Endothelial cell of umbilical vein (primary cell): ENCODE measurements at regions of chr6 and their contacts with region 1.

Region 1: DNA sequence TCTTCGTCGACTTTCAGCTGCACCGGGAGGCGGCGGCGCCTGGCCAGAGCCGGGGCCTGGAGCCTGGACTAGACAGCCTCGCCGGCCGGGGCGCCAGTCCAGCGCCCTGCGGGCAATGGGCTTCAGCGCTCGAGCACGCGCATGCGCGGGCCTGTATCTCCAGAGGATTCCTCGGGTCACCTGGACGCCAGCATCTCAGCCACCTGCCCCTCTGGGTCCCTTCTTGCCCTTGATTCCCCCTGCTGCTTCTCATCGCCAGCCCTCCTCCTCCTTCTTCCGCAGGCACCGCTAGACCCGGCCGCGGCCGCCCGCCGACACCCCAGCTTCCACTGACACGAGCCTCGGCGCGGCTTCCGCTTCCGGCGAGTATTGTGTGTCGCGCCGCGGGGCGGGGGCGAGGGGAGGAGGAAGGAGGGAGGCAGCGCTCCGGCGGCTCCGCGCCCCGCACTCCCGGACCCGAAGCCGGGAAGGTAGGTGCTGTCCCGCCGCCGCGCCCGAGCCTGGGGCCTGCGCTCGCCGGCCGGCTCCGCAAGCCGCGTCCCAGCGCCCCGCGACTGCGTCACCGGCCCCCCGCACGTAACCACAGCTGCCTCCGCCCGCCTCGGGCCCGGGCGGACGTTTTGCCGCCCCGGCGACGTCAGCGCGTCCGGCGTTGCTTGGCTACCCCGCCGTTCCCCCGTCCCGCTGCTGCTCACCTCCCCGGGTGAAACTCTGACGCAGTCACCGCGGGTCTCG is at the start of gene TRIM39:
- DNase-seq: peak; percentile 85
- H3K4me3 ChIP-seq: peak within 1 kb of the TSS; percentile 65 to 87 (median 85)
- H3K27ac ChIP-seq: peak within 1 kb of the TSS; percentile 89
- H3K4me1 ChIP-seq: peaks cover 24% of the 10 kb centered on the region
- H3K27me3 ChIP-seq: no peaks in the 10 kb centered on the region
- CTCF ChIP-seq: no peak
- POLR2A ChIP-seq: peak; percentile 62
- total RNA-seq, gene TRIM39: 13.1 and 13.5 TPM in 2 replicates

Region 2: DNA sequence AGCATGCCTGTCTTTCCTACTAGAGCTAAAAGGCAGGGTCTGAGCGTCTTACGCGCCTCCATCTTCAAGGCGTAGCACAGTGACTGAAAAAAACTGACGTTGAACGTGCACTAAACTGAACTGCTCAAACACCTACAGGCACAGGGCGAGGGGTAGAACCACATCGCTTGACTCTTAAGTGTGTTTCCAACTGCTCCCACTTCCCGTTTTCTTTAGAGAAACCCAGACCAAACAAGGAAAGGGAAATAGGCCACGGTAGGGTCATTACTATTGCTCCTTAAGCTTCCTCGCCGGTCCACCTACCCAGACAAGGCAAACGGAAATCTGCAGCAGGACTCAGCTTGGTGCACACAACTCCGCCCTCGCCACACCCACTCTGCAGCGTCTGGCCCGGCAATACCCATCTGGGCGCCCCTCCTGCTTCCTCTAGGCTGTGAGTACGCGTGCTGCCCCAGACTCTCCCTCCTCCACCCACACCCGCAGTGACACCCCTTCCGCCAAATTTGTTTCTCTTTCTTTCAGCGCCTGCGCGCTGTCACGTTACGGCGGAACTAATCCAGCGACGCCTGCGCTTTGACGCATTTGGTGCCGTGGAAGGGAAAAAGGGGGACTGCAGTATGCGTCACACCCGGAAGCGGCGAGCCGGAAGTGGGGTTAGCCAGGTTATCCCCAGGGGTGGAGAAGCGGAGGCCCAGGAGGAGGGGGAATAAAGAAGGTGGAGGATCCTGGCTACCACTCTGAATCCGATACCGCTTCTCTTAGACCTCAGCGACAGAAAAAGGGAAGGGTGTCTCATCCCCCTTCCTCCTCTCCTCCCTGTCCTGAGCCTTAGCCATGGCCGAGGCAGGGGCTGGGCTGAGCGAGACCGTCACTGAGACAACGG is 259.9 kb before region 1 on chr6 and contains the start of gene PPP1R11:
- CTCF ChIA-PET with region 1: no interaction called
- POLR2A ChIA-PET with region 1: no interaction called
- dilution Hi-C with region 1: no loop called
- intact Hi-C with region 1: loop called (anchors 5 kb)
- DNase-seq: peak; percentile 100
- H3K4me3 ChIP-seq: peak within 1 kb of the TSS; percentile 47 to 75 (median 51)
- H3K27ac ChIP-seq: peak within 1 kb of the TSS; percentile 91
- H3K4me1 ChIP-seq: peaks cover 22% of the 10 kb centered on the region
- H3K27me3 ChIP-seq: peaks cover 13 to 16% of the 10 kb centered on the region in 2 experiments
- CTCF ChIP-seq: no peak
- POLR2A ChIP-seq: no peak
- total RNA-seq, gene PPP1R11: 32.4 and 37.6 TPM in 2 replicates

Region 3: GRCh38 chr6:30212865-30213666 is 113.6 kb before region 1 on chr6 and contains the start of gene TRIM26:
- CTCF ChIA-PET with region 1: interaction called, 5 read pairs
- POLR2A ChIA-PET with region 1: interaction called, 3 read pairs
- dilution Hi-C with region 1: no loop called
- intact Hi-C with region 1: loop called (anchors 1 kb)
- DNase-seq: peak; percentile 98
- H3K4me3 ChIP-seq: peak within 1 kb of the TSS; percentile 71 to 84 (median 82)
- H3K27ac ChIP-seq: peak within 1 kb of the TSS; percentile 95
- H3K4me1 ChIP-seq: peaks cover 20% of the 10 kb centered on the region
- H3K27me3 ChIP-seq: no peaks in the 10 kb centered on the region
- CTCF ChIP-seq: no peak
- POLR2A ChIP-seq: peak; percentile 79
- total RNA-seq, gene TRIM26: 34.5 and 35.0 TPM in 2 replicates

Region 4: GRCh38 chr6:30272017-30272416 is 54.7 kb before region 1 on chr6:
- CTCF ChIA-PET with region 1: no interaction called
- POLR2A ChIA-PET with region 1: no interaction called
- dilution Hi-C with region 1: no loop called
- intact Hi-C with region 1: no loop called
- DNase-seq: no peak
- H3K4me3 ChIP-seq: no peak overlapping the region
- H3K27ac ChIP-seq: no peak overlapping the region
- H3K4me1 ChIP-seq: no peaks in the 10 kb centered on the region
- H3K27me3 ChIP-seq: peaks cover 2 to 17% of the 10 kb centered on the region in 2 experiments
- CTCF ChIP-seq: no peak
- POLR2A ChIP-seq: no peak